ENCODE measurements at regions of chr10 and their contacts with region 1.

Region 1: DNA sequence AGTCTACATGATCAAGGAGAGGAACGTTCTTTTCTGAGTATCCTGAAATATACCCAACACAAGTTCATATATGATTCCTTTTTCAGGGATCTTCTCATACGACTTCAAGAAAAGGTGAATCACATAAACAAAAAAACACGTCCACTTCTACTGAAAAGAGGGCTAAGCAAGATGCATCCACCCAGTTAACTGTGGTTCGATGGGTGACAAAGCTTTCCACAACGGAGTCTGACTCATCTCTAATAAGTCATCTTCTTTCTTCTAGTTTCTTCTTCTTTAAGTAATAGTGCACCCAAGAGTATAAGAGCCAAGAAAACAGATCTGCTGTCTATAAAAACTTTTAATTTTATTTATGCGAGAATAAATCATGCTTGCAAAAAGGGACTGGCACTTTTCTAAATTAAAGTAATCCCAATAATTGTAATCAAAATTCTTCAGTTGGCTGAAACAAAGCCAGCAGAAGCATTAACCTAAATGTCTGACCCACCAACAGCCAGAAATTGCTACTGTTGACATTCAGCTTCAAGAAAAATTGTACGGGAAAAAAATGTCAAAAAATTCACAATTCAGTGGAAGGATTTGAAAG is 146.9 kb upstream of the ANK3 start:
- DNase-seq: peak; percentile 98
- ATAC-seq: peak; percentile 86
- H3K4me3 ChIP-seq: peak overlapping the region; percentile 8
- H3K27ac ChIP-seq: peak overlapping the region; percentile 59
- H3K4me1 ChIP-seq: peaks cover 54% of the 10 kb centered on the region
- H3K27me3 ChIP-seq: no peaks in the 10 kb centered on the region
- CTCF ChIP-seq: no peak; the same call in 1 of the 2 replicates

Region 2: DNA sequence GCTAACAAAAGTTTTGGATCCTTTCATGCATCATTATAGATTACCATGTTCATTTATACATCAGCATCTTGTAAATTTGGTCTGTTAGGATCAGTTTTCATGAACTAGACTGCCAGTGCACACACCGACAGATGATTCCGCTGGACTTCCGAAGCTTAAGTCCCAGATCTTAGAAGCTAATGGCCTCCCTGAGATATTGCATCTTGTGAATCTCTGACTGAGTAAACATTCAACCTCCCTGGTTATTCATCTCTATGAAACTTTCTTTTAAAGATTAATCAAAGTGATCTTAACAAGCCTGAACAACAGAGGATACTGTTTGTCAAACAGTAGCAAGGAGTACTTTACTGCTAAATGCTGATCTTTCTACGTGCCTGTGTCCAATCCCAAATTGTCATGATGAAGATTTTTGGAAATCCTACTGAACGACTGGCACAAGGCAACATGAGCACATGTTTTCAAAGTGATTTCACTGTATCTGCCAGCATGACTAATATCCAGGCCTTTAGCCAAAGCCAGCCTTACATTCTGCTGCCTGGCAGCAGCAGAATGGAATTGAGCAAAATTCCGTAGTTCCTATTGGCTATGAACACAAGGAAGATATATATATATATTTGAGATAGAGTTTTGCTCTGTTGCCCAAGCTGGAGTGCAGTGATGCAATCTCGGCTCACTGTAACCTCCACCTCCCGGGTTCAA is 55.6 kb before region 1 on chr10:
- CTCF ChIA-PET with region 1: interaction called, 4 read pairs
- POLR2A ChIA-PET with region 1: interaction called, 4 read pairs
- intact Hi-C with region 1: loop called (anchors 5 kb)
- DNase-seq: peak; percentile 100
- ATAC-seq: peak; percentile 82
- H3K4me3 ChIP-seq: peak overlapping the region; percentile 23
- H3K27ac ChIP-seq: peak overlapping the region; percentile 80
- H3K4me1 ChIP-seq: peaks cover 40% of the 10 kb centered on the region
- H3K27me3 ChIP-seq: no peaks in the 10 kb centered on the region
- CTCF ChIP-seq: no peak

Region 3: GRCh38 chr10:60827791-60828488 is 291.3 kb after region 1 on chr10:
- CTCF ChIA-PET with region 1: no interaction called
- POLR2A ChIA-PET with region 1: no interaction called
- intact Hi-C with region 1: no loop called
- DNase-seq: peak; percentile 66
- ATAC-seq: peak; percentile 67
- H3K4me3 ChIP-seq: no peak overlapping the region
- H3K27ac ChIP-seq: no peak overlapping the region
- H3K4me1 ChIP-seq: peaks cover 8% of the 10 kb centered on the region; the same call in 1 of the 2 replicates
- H3K27me3 ChIP-seq: no peaks in the 10 kb centered on the region
- CTCF ChIP-seq: no peak

Measured in PC-3 (cell line).